CD4-positive, alpha-beta memory T cell (primary cell): ENCODE measurements at regions of chr3 and their contacts with region 1.

Region 1: DNA sequence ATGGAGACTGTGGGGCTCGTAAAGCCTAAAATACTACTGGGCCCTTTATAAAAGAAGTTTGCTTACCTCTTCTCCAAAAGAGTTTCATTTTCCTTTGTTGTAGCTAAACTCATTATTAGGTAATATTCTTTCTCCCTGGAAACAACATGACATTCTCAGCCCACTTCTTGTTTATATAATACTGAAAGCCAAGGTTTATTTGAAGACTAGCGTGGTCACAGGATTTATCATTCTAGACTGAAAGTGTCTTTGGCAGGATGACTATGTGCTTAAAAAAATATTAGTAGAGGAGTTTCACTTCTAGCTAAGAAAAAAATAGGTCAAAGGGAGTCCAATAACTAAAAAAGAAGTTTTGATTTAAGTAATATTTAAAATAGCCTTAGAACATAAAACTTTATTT is 1085.2 kb upstream of the CADM2 start:
- DNase-seq: no peak
- H3K4me3 ChIP-seq: no peak overlapping the region
- H3K4me3 Mint-ChIP-seq: no peak overlapping the region
- H3K27ac ChIP-seq: no peak overlapping the region
- H3K27ac Mint-ChIP-seq: no peak overlapping the region
- H3K4me1 ChIP-seq: no peaks in the 10 kb centered on the region
- H3K4me1 Mint-ChIP-seq: no peaks in the 10 kb centered on the region
- H3K27me3 ChIP-seq: no peaks in the 10 kb centered on the region
- H3K27me3 Mint-ChIP-seq: no peaks in the 10 kb centered on the region

Region 2: GRCh38 chr3:83821506-83821905 is 52.0 kb before region 1 on chr3:
- CTCF ChIA-PET with region 1: no interaction called
- POLR2A ChIA-PET with region 1: no interaction called
- intact Hi-C with region 1: loop called (anchors 2 kb)
- DNase-seq: no peak
- H3K4me3 ChIP-seq: no peak overlapping the region
- H3K4me3 Mint-ChIP-seq: no peak overlapping the region
- H3K27ac ChIP-seq: no peak overlapping the region
- H3K27ac Mint-ChIP-seq: no peak overlapping the region
- H3K4me1 ChIP-seq: no peaks in the 10 kb centered on the region
- H3K4me1 Mint-ChIP-seq: no peaks in the 10 kb centered on the region
- H3K27me3 ChIP-seq: no peaks in the 10 kb centered on the region
- H3K27me3 Mint-ChIP-seq: no peaks in the 10 kb centered on the region